Vagina (tissue), 2 donors: ENCODE measurements at regions of chr17 and their contacts with region 1.

Region 1: DNA sequence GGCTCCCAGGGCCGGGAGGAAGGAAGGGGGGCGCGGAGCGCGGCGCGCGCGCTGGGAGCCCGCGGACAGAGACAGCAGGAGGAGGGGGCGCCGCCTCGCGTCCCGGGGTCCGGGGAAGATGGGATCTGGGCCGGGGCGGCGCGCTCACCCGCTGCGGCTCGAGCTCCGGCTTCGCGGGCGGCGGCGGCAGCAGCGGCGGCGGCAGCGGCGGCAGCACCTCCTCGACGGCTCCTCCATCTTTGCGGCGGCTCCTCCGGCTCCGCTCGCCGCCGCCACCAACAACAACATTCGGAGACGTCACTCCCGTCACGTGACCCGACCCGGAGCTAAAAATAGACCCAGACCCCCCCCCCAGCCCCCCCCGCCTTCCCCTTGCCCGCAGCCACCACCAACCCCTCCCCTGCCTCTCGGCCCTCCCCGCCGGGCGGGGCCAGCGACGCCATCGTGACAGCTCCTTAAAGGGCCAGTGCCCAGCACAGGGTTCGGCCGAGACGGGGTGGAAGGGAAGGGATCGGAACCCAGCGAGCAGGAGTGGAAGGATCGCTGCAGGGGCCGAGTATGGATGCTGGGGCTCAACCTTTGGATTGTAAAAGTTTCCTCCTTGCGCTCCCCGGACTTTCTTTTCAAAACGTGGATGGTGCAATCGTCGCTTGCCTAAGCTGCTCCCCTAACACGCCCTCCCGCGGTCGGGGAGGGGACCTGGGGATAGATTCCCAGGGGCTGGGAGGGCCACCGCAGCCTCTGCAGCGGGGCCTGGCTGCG is at the start of gene HDAC5:
- DNase-seq: peak in 1 of 2 donors; percentile 98
- H3K4me3 ChIP-seq: peak within 1 kb of the TSS; percentile 84 to 96
- H3K27ac ChIP-seq: peak within 1 kb of the TSS; percentile 99
- H3K4me1 ChIP-seq: peaks cover 53% of the 10 kb centered on the region
- H3K27me3 ChIP-seq: no peaks in the 10 kb centered on the region
- CTCF ChIP-seq: peak in 2 of 3 experiments; percentile 51 to 62
- POLR2A ChIP-seq: peak in 1 of 2 donors; percentile 81
- total RNA-seq, gene HDAC5: 86.9 TPM

Region 2: GRCh38 chr17:44066204-44066930 is 57.2 kb before region 1 on chr17 and contains the start of gene LSM12:
- intact Hi-C with region 1: loop called (anchors 5 kb)
- DNase-seq: no peak
- H3K4me3 ChIP-seq: peak within 1 kb of the TSS; percentile 77 to 80
- H3K27ac ChIP-seq: peak within 1 kb of the TSS; percentile 96
- H3K4me1 ChIP-seq: peaks cover 40% of the 10 kb centered on the region
- H3K27me3 ChIP-seq: no peaks in the 10 kb centered on the region
- CTCF ChIP-seq: peak in 1 of 3 experiments; percentile 3
- POLR2A ChIP-seq: peak in 1 of 2 donors; percentile 73
- total RNA-seq, gene LSM12: 27.3 TPM